Left ventricle myocardium superior (tissue), 1 donor: ENCODE measurements at regions of chrX and their contacts with region 1.

Region 1: GRCh38 chrX:53571494-53571893 is 115.0 kb downstream of the HUWE1 start:
- DNase-seq: no peak
- ATAC-seq: no peak

Region 2: DNA sequence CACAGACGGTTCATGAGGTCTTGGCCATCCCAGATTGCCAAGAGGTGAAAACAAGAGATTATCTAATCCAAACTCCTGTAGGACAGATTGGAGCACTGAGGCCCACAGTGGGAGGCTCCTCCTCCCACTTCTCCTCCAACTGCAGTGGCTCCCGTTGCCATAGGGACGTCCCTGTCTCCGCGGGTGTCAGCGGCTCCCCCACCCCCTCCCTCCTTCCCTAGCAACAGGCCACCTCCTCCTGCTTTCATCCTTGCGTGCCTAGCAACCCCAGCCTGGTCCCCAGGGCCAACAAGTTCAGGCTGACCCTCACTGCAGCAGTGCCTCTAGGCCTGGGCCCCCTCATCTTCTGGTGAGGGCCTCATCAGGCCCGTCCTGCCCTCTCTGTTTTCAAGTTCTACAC is 283.3 kb before region 1 on chrX:
- intact Hi-C with region 1: no loop called
- DNase-seq: peak; percentile 68
- ATAC-seq: peak; percentile 77

Region 3: GRCh38 chrX:53631156-53631555 is 59.7 kb after region 1 on chrX:
- intact Hi-C with region 1: loop called (anchors 10 kb)
- DNase-seq: no peak
- ATAC-seq: no peak